B cell (primary cell): ENCODE measurements at regions of chr12 and their contacts with region 1.

Region 1: DNA sequence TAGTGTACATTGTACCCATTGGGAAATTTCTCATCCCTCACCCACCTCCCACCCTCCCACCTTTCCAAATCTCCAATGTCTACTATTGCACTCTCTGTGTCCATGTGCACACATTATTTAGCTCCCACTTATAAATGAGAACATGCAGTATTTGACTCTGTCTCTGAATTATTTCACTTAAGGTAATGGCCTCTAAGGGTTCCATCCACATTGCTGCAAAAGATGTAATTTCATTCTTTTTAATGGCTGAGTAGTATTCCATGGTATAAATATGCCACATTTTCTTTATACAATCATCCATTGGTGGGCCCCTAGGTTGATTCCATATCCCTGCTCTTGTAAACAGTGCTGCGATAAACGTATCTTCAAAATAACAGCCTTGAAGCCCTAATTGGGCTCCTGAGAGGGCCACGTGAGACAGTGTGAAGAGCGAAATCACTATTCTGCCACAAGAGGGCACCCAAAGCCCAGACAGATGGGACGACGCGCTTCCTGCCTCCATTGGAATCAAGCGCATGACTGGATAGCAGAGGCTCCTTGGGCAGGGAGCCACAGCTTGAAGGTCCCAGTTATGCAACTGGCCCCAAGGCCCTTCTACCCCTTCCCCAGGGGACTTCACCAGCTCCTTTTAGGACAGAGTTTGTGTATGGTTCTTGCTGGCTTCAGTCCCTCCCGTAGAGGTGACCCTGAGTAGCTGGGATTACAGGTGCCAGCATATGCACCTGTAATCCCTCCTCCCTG is 21.3 kb upstream of the CD27 start:
- DNase-seq: peak; percentile 91
- ATAC-seq: peak; percentile 34
- H3K4me3 ChIP-seq: peak overlapping the region in 1 of 5 experiments; percentile 18
- H3K4me3 Mint-ChIP-seq: peak overlapping the region; percentile 54
- H3K27ac ChIP-seq: peak overlapping the region; percentile 3 to 35
- H3K27ac Mint-ChIP-seq: peak overlapping the region; percentile 90
- H3K4me1 ChIP-seq: peaks cover 33 to 41% of the 10 kb centered on the region in 2 donors
- H3K4me1 Mint-ChIP-seq: peaks cover 39% of the 10 kb centered on the region
- H3K27me3 ChIP-seq: no peaks in the 10 kb centered on the region
- H3K27me3 Mint-ChIP-seq: peaks cover 13% of the 10 kb centered on the region
- CTCF ChIP-seq: peak; percentile 87

Region 2: GRCh38 chr12:5723711-5724252 is 699.7 kb before region 1 on chr12:
- CTCF ChIA-PET with region 1: no interaction called
- POLR2A ChIA-PET with region 1: no interaction called
- intact Hi-C with region 1: no loop called
- DNase-seq: no peak
- ATAC-seq: no peak
- H3K4me3 ChIP-seq: no peak overlapping the region
- H3K4me3 Mint-ChIP-seq: no peak overlapping the region
- H3K27ac ChIP-seq: no peak overlapping the region
- H3K27ac Mint-ChIP-seq: no peak overlapping the region
- H3K4me1 ChIP-seq: no peaks in the 10 kb centered on the region
- H3K4me1 Mint-ChIP-seq: no peaks in the 10 kb centered on the region
- H3K27me3 ChIP-seq: peaks cover 0 to 9% (median 2%) of the 10 kb centered on the region in 4 experiments
- H3K27me3 Mint-ChIP-seq: peaks cover 21% of the 10 kb centered on the region
- CTCF ChIP-seq: no peak

Region 3: DNA sequence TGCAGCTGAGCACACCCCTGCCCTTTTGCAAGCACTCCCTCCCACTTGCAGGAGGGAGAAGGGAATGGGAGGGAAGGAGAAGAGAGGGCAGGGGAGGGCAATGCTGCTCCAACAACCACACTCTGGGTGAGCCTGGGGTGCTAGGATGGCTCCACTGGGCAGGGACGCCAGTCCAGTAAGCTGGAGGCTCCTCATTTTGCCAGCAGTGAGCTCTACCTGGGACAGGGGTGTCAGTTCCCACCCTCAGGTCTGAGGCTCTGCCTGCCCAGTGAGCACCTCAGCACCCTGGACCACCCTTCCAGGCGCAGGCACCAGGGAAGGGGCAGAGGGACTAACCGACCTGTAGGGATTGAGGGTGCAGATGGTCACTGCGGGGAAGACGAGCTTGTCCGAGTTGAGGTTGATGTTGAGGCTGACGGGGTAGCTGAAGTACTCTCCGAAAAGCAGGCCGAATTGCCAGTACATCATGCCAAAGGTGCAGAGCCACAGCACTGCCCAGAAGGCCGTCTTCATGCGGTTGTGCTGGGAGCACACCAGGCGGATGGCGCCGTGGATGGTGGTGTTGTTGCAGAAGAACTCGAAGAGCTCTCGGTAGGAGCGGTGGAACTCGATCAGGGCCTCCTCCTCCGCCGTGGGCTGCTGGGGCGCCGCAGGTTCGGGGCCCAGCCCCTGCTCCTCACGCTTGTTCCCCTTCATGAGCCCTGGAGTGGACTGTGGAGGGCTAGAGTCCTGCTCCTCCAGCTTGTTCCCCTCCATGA is 49.2 kb before region 1 on chr12:
- CTCF ChIA-PET with region 1: no interaction called
- POLR2A ChIA-PET with region 1: no interaction called
- intact Hi-C with region 1: no loop called
- DNase-seq: no peak
- ATAC-seq: no peak
- H3K4me3 ChIP-seq: no peak overlapping the region
- H3K4me3 Mint-ChIP-seq: no peak overlapping the region
- H3K27ac ChIP-seq: no peak overlapping the region
- H3K27ac Mint-ChIP-seq: no peak overlapping the region
- H3K4me1 ChIP-seq: no peaks in the 10 kb centered on the region
- H3K4me1 Mint-ChIP-seq: no peaks in the 10 kb centered on the region
- H3K27me3 ChIP-seq: peaks cover 0 to 48% (median 19%) of the 10 kb centered on the region in 4 experiments
- H3K27me3 Mint-ChIP-seq: peaks cover 59% of the 10 kb centered on the region
- CTCF ChIP-seq: no peak

Region 4: GRCh38 chr12:6443361-6443983 is 20.0 kb after region 1 on chr12:
- CTCF ChIA-PET with region 1: interaction called, 87 read pairs
- POLR2A ChIA-PET with region 1: interaction called, 66 read pairs
- intact Hi-C with region 1: loop called (anchors 1 kb)
- DNase-seq: peak; percentile 60
- ATAC-seq: peak; percentile 34
- H3K4me3 ChIP-seq: peak overlapping the region in 2 of 5 experiments; percentile 17 to 46
- H3K4me3 Mint-ChIP-seq: peak overlapping the region; percentile 92
- H3K27ac ChIP-seq: peak overlapping the region; percentile 62 to 78
- H3K27ac Mint-ChIP-seq: peak overlapping the region; percentile 92
- H3K4me1 ChIP-seq: peaks cover 44 to 57% of the 10 kb centered on the region in 2 donors
- H3K4me1 Mint-ChIP-seq: peaks cover 63% of the 10 kb centered on the region
- H3K27me3 ChIP-seq: no peaks in the 10 kb centered on the region
- H3K27me3 Mint-ChIP-seq: no peaks in the 10 kb centered on the region
- CTCF ChIP-seq: no peak

Region 5: DNA sequence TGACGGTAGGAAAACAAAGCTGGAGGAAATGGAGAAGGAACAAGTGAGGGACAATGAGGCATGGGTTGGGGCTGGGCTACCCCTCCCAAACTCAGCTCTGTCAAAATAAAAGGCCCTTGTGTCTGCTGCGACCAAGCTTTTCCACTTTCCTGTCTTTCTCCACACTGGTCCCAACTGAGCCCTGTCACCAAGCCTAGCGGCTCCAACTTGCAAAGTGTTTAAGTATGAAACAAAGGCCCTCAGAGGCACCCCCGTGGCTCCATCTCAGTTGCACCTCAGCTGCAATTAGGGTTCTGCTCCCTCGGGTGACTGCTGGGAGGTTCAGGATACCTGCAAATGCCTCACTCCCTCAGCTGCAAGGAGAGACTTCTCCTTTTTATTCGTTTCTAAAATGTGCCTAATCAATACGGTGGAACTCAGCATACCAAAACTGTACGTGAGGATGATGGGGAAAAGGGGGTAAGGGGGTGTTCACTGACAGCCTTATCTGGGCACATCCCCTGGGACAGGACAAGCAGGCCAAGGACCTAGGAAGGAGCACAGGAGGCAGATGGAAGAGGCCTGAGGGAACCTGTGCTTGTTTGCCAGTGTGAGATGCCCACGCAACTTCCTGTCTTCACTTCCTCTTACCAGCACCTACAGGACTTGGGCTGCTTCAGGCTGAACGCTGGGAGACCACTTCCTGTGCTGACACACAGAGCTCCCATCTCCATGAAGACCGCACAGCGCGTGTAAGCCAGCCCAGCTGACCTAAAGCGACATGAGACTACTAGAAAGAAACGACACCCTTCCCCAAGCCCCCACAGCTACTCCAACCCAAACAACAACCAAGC is 38.2 kb after region 1 on chr12:
- CTCF ChIA-PET with region 1: interaction called, 383 read pairs
- POLR2A ChIA-PET with region 1: interaction called, 72 read pairs
- intact Hi-C with region 1: loop called (anchors 1 kb)
- DNase-seq: peak; percentile 94
- ATAC-seq: peak; percentile 87
- H3K4me3 ChIP-seq: peak overlapping the region in 2 of 5 experiments; percentile 20 to 23
- H3K4me3 Mint-ChIP-seq: peak overlapping the region; percentile 72
- H3K27ac ChIP-seq: peak overlapping the region; percentile 89 to 93
- H3K27ac Mint-ChIP-seq: peak overlapping the region; percentile 98
- H3K4me1 ChIP-seq: peaks cover 67 to 93% of the 10 kb centered on the region in 2 donors
- H3K4me1 Mint-ChIP-seq: peaks cover 86% of the 10 kb centered on the region
- H3K27me3 ChIP-seq: no peaks in the 10 kb centered on the region
- H3K27me3 Mint-ChIP-seq: no peaks in the 10 kb centered on the region
- CTCF ChIP-seq: no peak

Region 6: DNA sequence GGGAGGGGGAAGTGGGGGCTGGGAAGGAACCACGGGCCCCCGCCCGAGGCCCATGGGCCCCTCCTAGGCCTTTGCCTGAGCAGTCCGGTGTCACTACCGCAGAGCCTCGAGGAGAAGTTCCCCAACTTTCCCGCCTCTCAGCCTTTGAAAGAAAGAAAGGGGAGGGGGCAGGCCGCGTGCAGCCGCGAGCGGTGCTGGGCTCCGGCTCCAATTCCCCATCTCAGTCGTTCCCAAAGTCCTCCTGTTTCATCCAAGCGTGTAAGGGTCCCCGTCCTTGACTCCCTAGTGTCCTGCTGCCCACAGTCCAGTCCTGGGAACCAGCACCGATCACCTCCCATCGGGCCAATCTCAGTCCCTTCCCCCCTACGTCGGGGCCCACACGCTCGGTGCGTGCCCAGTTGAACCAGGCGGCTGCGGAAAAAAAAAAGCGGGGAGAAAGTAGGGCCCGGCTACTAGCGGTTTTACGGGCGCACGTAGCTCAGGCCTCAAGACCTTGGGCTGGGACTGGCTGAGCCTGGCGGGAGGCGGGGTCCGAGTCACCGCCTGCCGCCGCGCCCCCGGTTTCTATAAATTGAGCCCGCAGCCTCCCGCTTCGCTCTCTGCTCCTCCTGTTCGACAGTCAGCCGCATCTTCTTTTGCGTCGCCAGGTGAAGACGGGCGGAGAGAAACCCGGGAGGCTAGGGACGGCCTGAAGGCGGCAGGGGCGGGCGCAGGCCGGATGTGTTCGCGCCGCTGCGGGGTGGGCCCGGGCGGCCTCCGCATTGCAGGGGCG is 110.7 kb after region 1 on chr12 and contains the start of gene GAPDH:
- CTCF ChIA-PET with region 1: interaction called, 222 read pairs
- POLR2A ChIA-PET with region 1: interaction called, 39 read pairs
- intact Hi-C with region 1: loop called (anchors 1 kb)
- DNase-seq: peak; percentile 91
- ATAC-seq: peak; percentile 71
- H3K4me3 ChIP-seq: peak within 1 kb of the TSS; percentile 71 to 97 (median 92)
- H3K4me3 Mint-ChIP-seq: peak within 1 kb of the TSS; percentile 99
- H3K27ac ChIP-seq: peak within 1 kb of the TSS; percentile 74 to 80
- H3K27ac Mint-ChIP-seq: peak within 1 kb of the TSS; percentile 98
- H3K4me1 ChIP-seq: peaks cover 27 to 37% of the 10 kb centered on the region in 2 donors
- H3K4me1 Mint-ChIP-seq: peaks cover 48% of the 10 kb centered on the region
- H3K27me3 ChIP-seq: no peaks in the 10 kb centered on the region
- H3K27me3 Mint-ChIP-seq: no peaks in the 10 kb centered on the region
- CTCF ChIP-seq: no peak
- total RNA-seq, gene GAPDH: 499 and 507 TPM in 2 replicates

Region 7: DNA sequence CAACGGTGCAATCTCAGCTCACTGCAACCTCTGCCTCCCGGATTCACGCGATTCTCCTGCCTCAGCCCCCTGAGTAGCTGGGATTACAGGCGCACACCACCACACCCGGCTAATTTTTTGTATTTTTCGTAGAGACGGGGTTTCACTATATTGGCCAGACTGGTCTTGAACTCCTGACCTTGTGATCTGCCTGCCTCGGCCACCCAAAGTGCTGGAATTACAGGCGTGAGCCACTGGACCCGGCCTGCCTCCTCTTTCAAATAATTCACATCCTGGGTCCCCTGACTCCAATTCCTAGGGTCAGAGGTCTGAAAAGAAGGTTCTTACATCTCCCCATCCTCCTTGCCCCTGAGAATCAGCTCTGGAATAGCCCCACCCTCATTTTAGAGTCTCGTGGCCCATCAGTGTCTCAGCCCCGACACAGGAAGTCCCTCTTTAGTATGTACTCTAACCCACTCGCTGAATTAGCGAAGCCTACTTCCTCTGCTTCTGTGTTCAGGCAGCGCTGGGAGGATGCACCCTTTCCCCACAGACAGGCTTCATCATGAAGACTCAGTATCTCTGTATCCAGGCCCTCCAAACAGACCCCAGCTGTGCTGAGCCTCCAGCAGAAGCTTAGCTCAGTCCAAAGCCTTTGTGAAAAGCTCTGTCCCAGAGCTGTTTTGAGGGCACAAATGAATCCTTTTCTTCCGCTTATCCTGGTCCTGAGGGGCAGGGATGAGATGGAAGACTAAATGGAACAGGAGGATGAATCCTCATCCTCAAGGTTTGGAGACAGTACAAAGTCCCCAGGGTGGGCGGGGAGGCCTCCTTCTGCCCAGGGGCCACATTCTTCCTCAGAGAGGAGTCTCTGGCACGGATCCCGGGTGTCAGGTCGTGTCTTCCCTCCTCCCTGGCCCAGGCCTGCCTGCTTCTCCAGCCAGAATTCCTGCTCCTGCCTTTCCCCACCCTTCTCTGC is 208.9 kb after region 1 on chr12:
- CTCF ChIA-PET with region 1: no interaction called
- POLR2A ChIA-PET with region 1: no interaction called
- intact Hi-C with region 1: loop called (anchors 1 kb)
- DNase-seq: peak; percentile 83
- ATAC-seq: peak; percentile 44
- H3K4me3 ChIP-seq: peak overlapping the region; percentile 12 to 70 (median 55)
- H3K4me3 Mint-ChIP-seq: peak overlapping the region; percentile 97
- H3K27ac ChIP-seq: peak overlapping the region; percentile 85 to 86
- H3K27ac Mint-ChIP-seq: peak overlapping the region; percentile 99
- H3K4me1 ChIP-seq: peaks cover 66 to 88% of the 10 kb centered on the region in 2 donors
- H3K4me1 Mint-ChIP-seq: peaks cover 73% of the 10 kb centered on the region
- H3K27me3 ChIP-seq: no peaks in the 10 kb centered on the region
- H3K27me3 Mint-ChIP-seq: no peaks in the 10 kb centered on the region
- CTCF ChIP-seq: no peak